Ovary (tissue), 10 donors: ENCODE measurements at regions of chr2 and their contacts with region 1.

Region 1: DNA sequence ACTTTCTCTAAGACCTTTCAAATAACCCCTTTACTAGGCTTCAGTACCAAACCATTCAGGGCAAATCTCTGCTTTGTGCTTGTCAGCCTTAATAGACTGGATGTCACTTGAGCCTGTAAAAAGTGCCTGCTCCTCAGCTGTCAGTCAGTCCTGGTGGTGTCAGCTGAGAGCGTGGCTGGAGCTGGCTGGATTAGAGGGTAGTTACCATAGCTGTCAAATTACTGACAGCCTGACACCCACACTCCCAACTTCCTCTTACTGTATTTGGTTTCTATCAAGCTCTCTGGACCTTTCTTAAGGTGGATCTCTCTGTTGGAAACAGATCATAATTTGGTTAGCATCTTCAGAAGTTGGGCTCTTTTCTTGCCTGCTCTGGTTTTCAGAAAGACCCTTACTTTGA is 371.4 kb upstream of the ATP5MC3 start:
- DNase-seq: no peak
- H3K4me3 ChIP-seq: no peak overlapping the region
- H3K27ac ChIP-seq: no peak overlapping the region
- H3K4me1 ChIP-seq: no peaks in the 10 kb centered on the region
- H3K27me3 ChIP-seq: no peaks in the 10 kb centered on the region
- CTCF ChIP-seq: no peak
- EP300 ChIP-seq: no peak
- POLR2A ChIP-seq: no peak

Region 2: GRCh38 chr2:175576875-175577274 is 24.0 kb after region 1 on chr2:
- intact Hi-C with region 1: loop called in 1 of 4 experiments (anchors 2 kb)
- DNase-seq: no peak
- H3K4me3 ChIP-seq: no peak overlapping the region
- H3K27ac ChIP-seq: no peak overlapping the region
- H3K4me1 ChIP-seq: no peaks in the 10 kb centered on the region
- H3K27me3 ChIP-seq: no peaks in the 10 kb centered on the region
- CTCF ChIP-seq: no peak
- EP300 ChIP-seq: no peak
- POLR2A ChIP-seq: no peak

Region 3: DNA sequence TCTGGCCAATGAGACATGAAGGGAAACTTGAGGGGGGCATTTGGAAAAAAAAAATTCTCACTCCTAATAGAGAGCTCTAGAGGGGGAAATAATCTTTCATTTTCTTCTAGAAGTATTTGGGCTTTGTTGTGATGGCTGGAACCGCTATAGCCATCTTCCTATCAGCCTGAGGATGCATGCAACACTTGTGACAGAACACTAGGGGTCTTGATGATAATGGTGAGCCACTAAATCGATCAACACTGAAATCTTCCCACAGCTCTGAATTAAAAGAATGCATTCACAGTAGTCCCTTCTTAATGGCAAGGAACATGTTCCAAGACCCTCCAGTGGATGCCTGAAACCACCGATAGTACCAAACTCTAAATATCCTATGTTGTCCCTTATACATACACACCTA is 123.9 kb after region 1 on chr2:
- intact Hi-C with region 1: no loop called
- DNase-seq: no peak
- H3K4me3 ChIP-seq: no peak overlapping the region
- H3K27ac ChIP-seq: no peak overlapping the region
- H3K4me1 ChIP-seq: no peaks in the 10 kb centered on the region
- H3K27me3 ChIP-seq: no peaks in the 10 kb centered on the region
- CTCF ChIP-seq: no peak
- EP300 ChIP-seq: no peak
- POLR2A ChIP-seq: no peak

Region 4: DNA sequence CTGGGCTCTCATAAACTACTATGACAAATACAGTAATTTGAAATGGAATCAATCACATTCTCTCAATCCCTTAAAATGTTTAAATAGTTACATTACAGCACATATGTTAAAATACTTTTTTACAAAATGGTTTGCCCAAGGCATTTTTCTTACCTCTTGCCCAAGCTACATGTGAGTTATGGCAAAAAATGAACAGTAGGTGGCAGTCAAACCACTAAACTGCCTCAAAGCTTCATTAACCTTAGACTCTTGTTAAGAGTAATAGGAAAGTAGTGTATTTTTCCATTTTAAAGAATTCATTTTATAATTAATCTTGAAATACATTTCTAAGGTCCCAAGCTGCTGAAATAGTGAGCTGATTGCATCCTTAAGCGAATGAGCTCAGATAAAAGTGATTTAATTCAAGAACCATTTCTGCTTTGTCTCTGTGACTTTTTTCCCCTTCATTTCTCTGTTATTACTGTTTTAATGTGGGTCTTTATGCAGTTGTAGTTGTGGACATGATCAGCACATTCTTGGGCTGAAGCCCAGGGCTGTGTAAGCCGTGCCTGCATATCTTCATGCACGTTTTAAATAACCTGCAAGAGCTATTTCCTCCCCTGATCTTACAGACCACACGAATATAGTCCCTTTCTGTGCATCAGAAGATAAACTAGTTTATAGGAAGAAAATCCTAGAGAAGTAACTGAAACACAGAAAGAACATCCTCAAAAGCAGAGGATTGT is 137.4 kb after region 1 on chr2:
- intact Hi-C with region 1: no loop called
- DNase-seq: peak in 1 of 5 donors; percentile 25
- H3K4me3 ChIP-seq: no peak overlapping the region
- H3K27ac ChIP-seq: no peak overlapping the region
- H3K4me1 ChIP-seq: no peaks in the 10 kb centered on the region
- H3K27me3 ChIP-seq: no peaks in the 10 kb centered on the region
- CTCF ChIP-seq: peak; percentile 40 to 53 (median 44)
- EP300 ChIP-seq: no peak
- POLR2A ChIP-seq: no peak